Lower leg skin (tissue), 4 donors: ENCODE measurements at regions of chr3 and their contacts with region 1.

Region 1: GRCh38 chr3:54232618-54233017 is 110.3 kb downstream of the CACNA2D3 start:
- DNase-seq: no peak
- H3K4me3 ChIP-seq: no peak overlapping the region
- CTCF ChIP-seq: no peak
- POLR2A ChIP-seq: no peak

Region 2: DNA sequence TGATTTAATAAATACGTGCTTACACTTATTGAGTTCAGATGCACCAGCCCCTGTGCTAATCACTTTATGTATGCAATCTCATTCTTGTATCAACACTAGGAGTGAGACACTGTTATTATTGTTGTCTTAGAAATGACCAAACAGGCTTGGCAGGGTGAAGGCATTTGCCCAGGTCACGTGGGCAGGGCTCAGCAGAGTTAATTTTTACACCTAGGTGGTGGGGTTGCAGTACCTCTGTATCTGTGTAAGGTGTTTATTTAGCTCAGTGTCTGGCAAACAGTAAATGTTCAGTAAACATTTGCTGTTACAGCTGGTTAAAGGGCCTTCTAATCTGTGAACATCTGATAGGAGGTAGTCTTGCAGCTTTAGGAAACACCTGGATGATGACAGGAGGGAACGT is 89.7 kb after region 1 on chr3:
- intact Hi-C with region 1: no loop called
- DNase-seq: no peak
- H3K4me3 ChIP-seq: no peak overlapping the region
- CTCF ChIP-seq: no peak
- POLR2A ChIP-seq: no peak

Region 3: GRCh38 chr3:55556619-55557537 is 1324.3 kb after region 1 on chr3:
- intact Hi-C with region 1: loop called (anchors 5 kb)
- DNase-seq: no peak
- H3K4me3 ChIP-seq: no peak overlapping the region
- CTCF ChIP-seq: no peak
- POLR2A ChIP-seq: no peak